Natural killer cell (primary cell): ENCODE measurements at regions of chr19 and their contacts with region 1.

Region 1: GRCh38 chr19:50025024-50025789 is at the start of gene VRK3:
- DNase-seq: peak; percentile 94 to 100
- ATAC-seq: peak; percentile 84 to 91 (median 84)
- H3K4me3 ChIP-seq: peak within 1 kb of the TSS; percentile 82
- H3K4me3 Mint-ChIP-seq: peak within 1 kb of the TSS; percentile 99
- H3K27ac ChIP-seq: peak within 1 kb of the TSS; percentile 95
- H3K27ac Mint-ChIP-seq: peak within 1 kb of the TSS; percentile 98 to 100
- H3K4me1 ChIP-seq: peaks cover 32% of the 10 kb centered on the region
- H3K4me1 Mint-ChIP-seq: peaks cover 33 to 63% of the 10 kb centered on the region in 2 donors
- H3K27me3 ChIP-seq: no peaks in the 10 kb centered on the region
- H3K27me3 Mint-ChIP-seq: no peaks in the 10 kb centered on the region
- CTCF ChIP-seq: peak; percentile 23
- total RNA-seq, gene VRK3: 82.7 to 105 (median 93.7) TPM

Region 2: GRCh38 chr19:49929611-49930482 is 95.4 kb before region 1 on chr19:
- intact Hi-C with region 1: loop called (anchors 5 kb)
- DNase-seq: peak; percentile 88 to 98
- ATAC-seq: peak; percentile 83 to 95 (median 86)
- H3K4me3 ChIP-seq: peak overlapping the region; percentile 97
- H3K4me3 Mint-ChIP-seq: peak overlapping the region; percentile 99
- H3K27ac ChIP-seq: peak overlapping the region; percentile 91
- H3K27ac Mint-ChIP-seq: peak overlapping the region; percentile 97
- H3K4me1 ChIP-seq: peaks cover 61% of the 10 kb centered on the region
- H3K4me1 Mint-ChIP-seq: peaks cover 61 to 68% of the 10 kb centered on the region in 2 donors
- H3K27me3 ChIP-seq: no peaks in the 10 kb centered on the region
- H3K27me3 Mint-ChIP-seq: no peaks in the 10 kb centered on the region
- CTCF ChIP-seq: no peak

Region 3: GRCh38 chr19:49939721-49940481 is 85.3 kb before region 1 on chr19:
- intact Hi-C with region 1: no loop called
- DNase-seq: peak in 1 of 2 donors; percentile 40
- ATAC-seq: no peak
- H3K4me3 ChIP-seq: no peak overlapping the region
- H3K4me3 Mint-ChIP-seq: no peak overlapping the region
- H3K27ac ChIP-seq: no peak overlapping the region
- H3K27ac Mint-ChIP-seq: no peak overlapping the region
- H3K4me1 ChIP-seq: peaks cover 8% of the 10 kb centered on the region
- H3K4me1 Mint-ChIP-seq: peaks cover 10 to 11% of the 10 kb centered on the region in 2 donors
- H3K27me3 ChIP-seq: no peaks in the 10 kb centered on the region
- H3K27me3 Mint-ChIP-seq: peaks cover 14 to 17% of the 10 kb centered on the region in 2 donors
- CTCF ChIP-seq: no peak

Region 4: DNA sequence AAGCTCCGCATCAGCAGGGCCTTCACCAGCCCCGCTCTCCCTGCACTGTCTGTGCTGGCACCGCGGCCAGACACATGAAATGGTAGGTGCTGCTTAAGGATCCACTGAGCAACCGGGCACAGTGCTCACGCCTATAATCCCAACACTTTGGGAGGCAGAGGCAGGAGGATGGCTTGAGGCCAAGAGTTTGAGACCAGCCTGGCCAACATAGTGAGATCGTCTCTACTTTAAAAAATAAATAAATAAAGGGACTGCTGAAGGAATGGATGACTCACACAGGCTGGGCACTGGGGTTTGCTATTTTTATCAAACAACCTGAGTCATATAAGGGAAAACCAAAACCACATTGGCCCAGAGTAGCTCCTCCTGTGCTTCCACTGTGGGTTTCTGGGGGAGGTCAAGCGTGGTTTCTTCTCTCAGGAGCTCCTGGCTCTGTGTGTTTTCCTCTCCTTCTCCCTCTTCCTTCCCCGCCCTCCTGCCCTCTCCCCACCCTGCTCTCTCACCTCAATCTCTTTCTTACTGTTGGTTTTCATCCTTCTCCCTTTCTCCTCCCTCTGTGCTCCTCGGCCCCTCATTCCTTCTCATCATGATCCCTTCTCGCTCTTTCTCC is 21.3 kb before region 1 on chr19:
- intact Hi-C with region 1: loop called (anchors 2 kb)
- DNase-seq: peak; percentile 44 to 45
- ATAC-seq: peak; percentile 51 to 69 (median 58)
- H3K4me3 ChIP-seq: peak overlapping the region; percentile 17
- H3K4me3 Mint-ChIP-seq: peak overlapping the region; percentile 79
- H3K27ac ChIP-seq: peak overlapping the region; percentile 71
- H3K27ac Mint-ChIP-seq: peak overlapping the region; percentile 87 to 90
- H3K4me1 ChIP-seq: peaks cover 50% of the 10 kb centered on the region
- H3K4me1 Mint-ChIP-seq: peaks cover 46 to 61% of the 10 kb centered on the region in 2 donors
- H3K27me3 ChIP-seq: no peaks in the 10 kb centered on the region
- H3K27me3 Mint-ChIP-seq: no peaks in the 10 kb centered on the region
- CTCF ChIP-seq: no peak